Right ventricle myocardium inferior (tissue), 1 donor: ENCODE measurements at regions of chr7 and their contacts with region 1.

Region 1: GRCh38 chr7:116227678-116228239 is 17.4 kb downstream of the TES start:
- DNase-seq: no peak
- ATAC-seq: peak; percentile 53

Region 2: GRCh38 chr7:116159711-116160110 is 68.0 kb before region 1 on chr7:
- intact Hi-C with region 1: no loop called
- DNase-seq: no peak
- ATAC-seq: no peak

Region 3: GRCh38 chr7:116211006-116211912 is 16.5 kb before region 1 on chr7:
- intact Hi-C with region 1: loop called (anchors 2 kb)
- DNase-seq: peak; percentile 83
- ATAC-seq: peak; percentile 89

Region 4: GRCh38 chr7:116316833-116317612 is 89.3 kb after region 1 on chr7:
- intact Hi-C with region 1: no loop called
- DNase-seq: no peak
- ATAC-seq: peak; percentile 86

Region 5: GRCh38 chr7:116348331-116348730 is 120.6 kb after region 1 on chr7:
- intact Hi-C with region 1: no loop called
- DNase-seq: no peak
- ATAC-seq: no peak